Adrenal gland (tissue), 19 donors: ENCODE measurements at regions of chr10 and their contacts with region 1.

Region 1: DNA sequence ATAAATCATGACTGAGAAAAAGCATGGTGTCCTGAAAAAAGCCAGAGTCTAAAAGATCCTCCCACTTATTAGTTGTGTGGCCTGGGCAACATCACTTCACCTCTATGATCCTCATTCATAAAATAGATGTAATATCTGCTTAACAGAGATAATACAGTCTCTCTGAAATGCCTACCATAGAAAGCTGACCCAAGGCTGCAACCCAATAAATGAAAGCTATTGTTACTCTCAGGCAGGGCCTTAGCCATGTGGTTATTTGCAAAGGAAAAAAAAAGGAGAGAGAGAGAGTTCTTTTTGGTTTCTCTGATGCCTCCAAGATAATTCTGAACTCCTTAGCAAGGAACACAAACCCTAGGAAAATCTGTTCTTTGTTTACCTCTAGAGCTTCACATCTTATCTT is 7.9 kb downstream of the FAM13C start:
- DNase-seq: no peak
- H3K4me3 ChIP-seq: no peak overlapping the region
- H3K27ac ChIP-seq: peak overlapping the region in 1 of 5 donors; percentile 31
- H3K4me1 ChIP-seq: peaks cover 0 to 33% of the 10 kb centered on the region in 2 donors
- H3K27me3 ChIP-seq: no peaks in the 10 kb centered on the region
- CTCF ChIP-seq: no peak
- POLR2A ChIP-seq: no peak

Region 2: DNA sequence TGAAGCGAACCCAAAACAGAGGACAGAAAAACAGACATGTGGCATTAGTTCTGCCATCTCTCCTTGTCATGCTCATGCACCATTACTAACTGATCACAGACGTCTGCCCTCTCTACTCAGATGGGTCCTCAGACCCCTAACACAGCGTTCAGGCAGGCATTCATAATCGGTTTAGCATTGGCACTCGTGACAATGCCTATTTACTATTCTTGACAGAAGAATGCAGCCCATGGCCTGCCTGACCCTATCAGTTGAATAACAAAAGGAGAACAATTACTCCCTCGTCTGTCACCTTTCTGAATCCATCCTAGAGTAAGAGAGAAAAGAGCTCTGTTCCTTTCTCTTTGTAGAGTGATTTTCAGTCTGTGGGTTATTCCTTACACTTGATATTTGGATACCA is 372.6 kb before region 1 on chr10:
- intact Hi-C with region 1: no loop called
- DNase-seq: no peak
- H3K4me3 ChIP-seq: no peak overlapping the region
- H3K27ac ChIP-seq: no peak overlapping the region
- H3K4me1 ChIP-seq: peaks cover 0 to 3% of the 10 kb centered on the region in 2 donors
- H3K27me3 ChIP-seq: no peaks in the 10 kb centered on the region
- CTCF ChIP-seq: no peak
- POLR2A ChIP-seq: no peak

Region 3: DNA sequence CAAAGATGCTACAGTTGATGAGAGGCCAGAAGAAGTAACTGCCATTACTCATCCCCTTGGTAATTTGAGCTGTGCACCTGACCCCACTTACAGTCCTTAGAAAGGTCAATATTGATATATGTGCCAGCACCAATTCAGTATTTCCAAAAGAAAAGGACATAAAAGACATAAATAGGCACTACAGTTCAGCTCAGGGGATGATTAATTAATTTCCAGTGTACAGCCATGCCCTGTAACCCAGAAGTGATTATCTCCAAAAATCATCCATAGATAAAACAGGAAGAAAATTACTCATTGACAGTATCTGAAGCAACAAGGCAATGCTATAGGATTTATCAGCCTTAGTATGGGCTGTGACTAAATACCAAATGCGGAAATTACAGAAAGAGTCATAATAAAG is 95.5 kb before region 1 on chr10:
- intact Hi-C with region 1: loop called (anchors 10 kb)
- DNase-seq: no peak
- H3K4me3 ChIP-seq: no peak overlapping the region
- H3K27ac ChIP-seq: no peak overlapping the region
- H3K4me1 ChIP-seq: peaks cover 0 to 9% of the 10 kb centered on the region in 2 donors
- H3K27me3 ChIP-seq: no peaks in the 10 kb centered on the region
- CTCF ChIP-seq: no peak
- POLR2A ChIP-seq: no peak

Region 4: GRCh38 chr10:59265141-59265540 is 89.3 kb before region 1 on chr10:
- intact Hi-C with region 1: loop called in 1 of 2 experiments (anchors 10 kb)
- DNase-seq: no peak
- H3K4me3 ChIP-seq: no peak overlapping the region
- H3K27ac ChIP-seq: no peak overlapping the region
- H3K4me1 ChIP-seq: no peaks in the 10 kb centered on the region
- H3K27me3 ChIP-seq: no peaks in the 10 kb centered on the region
- CTCF ChIP-seq: no peak
- POLR2A ChIP-seq: no peak